Natural killer cell (primary cell): ENCODE measurements at regions of chr1 and their contacts with region 1.

Region 1: DNA sequence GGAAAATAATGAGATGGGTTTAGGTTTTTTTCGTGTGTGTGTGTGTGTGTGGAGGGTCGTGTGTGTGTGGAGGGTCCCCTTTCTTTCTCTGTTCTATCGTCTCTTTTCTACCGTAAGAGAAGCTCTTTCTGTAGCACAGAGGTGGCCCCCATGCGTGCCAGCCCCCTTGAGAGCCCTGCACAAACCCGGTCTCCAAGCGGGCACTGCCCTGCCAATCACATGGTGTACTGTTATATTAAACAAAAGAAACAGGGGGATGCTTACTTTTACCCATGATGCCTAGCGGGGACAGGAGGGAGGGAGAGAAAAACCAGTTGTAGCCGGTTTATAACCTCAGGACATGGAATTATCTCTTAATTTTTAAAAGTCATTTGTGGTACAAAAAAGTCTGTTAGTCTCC is 41.0 kb downstream of the GATAD2B start:
- DNase-seq: no peak
- ATAC-seq: no peak
- H3K4me3 ChIP-seq: no peak overlapping the region
- H3K4me3 Mint-ChIP-seq: no peak overlapping the region
- H3K27ac ChIP-seq: no peak overlapping the region
- H3K27ac Mint-ChIP-seq: no peak overlapping the region
- H3K4me1 ChIP-seq: peaks cover 14% of the 10 kb centered on the region
- H3K4me1 Mint-ChIP-seq: peaks cover 18 to 22% of the 10 kb centered on the region in 2 donors
- H3K27me3 ChIP-seq: no peaks in the 10 kb centered on the region
- H3K27me3 Mint-ChIP-seq: no peaks in the 10 kb centered on the region
- CTCF ChIP-seq: no peak

Region 2: DNA sequence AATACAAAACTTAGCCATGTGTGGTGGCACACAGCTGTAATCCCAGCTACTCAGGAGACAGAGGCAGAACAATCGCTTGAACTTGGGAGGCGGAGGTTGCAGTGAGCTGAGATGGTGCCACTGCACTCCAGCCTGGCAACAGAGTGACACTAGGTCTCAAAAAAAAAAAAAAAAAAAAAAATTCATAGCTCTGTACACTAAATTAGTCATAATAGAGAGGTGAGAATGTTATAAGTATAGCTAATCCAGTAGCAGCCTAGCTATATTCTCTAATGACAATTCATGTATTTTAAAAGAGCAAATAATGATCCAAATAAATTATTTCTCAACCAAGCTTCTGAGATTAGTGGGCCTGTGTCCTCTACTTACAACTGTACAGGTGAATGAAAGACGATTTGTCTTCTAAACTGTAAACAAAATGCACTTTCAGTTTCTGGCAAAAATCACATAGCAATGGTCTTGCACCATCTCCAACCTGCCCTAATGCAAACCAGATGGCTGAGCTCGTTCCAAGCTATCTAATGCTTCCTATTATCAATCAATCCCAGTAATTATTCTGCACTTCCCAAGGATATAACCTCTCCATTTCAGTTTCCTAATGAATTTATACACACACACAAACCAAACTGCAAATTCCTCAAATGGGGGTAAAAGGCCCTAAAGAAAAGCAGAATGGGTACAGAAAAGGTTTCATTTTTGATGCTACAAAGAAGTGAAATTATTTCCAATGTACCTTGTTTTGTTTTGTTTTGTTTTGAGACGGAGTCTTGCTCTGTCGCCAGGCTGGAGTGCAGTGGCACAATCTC is 15.5 kb before region 1 on chr1:
- intact Hi-C with region 1: loop called (anchors 2 kb)
- DNase-seq: no peak
- ATAC-seq: peak; percentile 35 to 78 (median 54)
- H3K4me3 ChIP-seq: no peak overlapping the region
- H3K4me3 Mint-ChIP-seq: no peak overlapping the region
- H3K27ac ChIP-seq: no peak overlapping the region
- H3K27ac Mint-ChIP-seq: peak overlapping the region; percentile 78 to 89
- H3K4me1 ChIP-seq: peaks cover 5% of the 10 kb centered on the region
- H3K4me1 Mint-ChIP-seq: peaks cover 27 to 38% of the 10 kb centered on the region in 2 donors
- H3K27me3 ChIP-seq: no peaks in the 10 kb centered on the region
- H3K27me3 Mint-ChIP-seq: no peaks in the 10 kb centered on the region
- CTCF ChIP-seq: no peak